ENCODE measurements at regions of chr4 and their contacts with region 1.

Region 1: DNA sequence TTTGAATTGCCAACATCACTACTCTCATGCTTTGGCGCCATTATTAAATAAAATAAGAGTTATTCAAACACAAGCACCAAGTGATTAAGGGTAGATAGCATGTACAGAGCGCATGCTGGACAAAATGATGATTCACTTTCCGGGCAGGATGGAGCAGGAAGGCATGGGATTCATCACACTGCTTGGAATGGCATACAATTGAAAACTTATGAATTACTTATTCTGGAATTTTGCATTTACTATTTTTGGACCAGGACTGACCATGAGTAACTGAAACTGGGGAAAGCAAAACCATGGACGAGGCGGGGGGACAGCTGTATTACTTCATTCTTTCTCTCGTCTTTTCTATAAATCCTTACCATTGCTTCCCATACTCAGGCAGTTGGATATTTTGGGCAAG is 28.5 kb upstream of the FGF5 start:
- DNase-seq: peak; percentile 77
- H3K4me3 ChIP-seq: no peak overlapping the region
- H3K27ac ChIP-seq: peak overlapping the region; percentile 88
- H3K4me1 ChIP-seq: peaks cover 43% of the 10 kb centered on the region
- H3K27me3 ChIP-seq: no peaks in the 10 kb centered on the region
- CTCF ChIP-seq: no peak
- POLR2A ChIP-seq: no peak

Region 2: GRCh38 chr4:79650794-79651431 is 587.1 kb before region 1 on chr4:
- CTCF ChIA-PET with region 1: no interaction called
- POLR2A ChIA-PET with region 1: no interaction called
- dilution Hi-C with region 1: no loop called
- intact Hi-C with region 1: loop called (anchors 1 kb)
- DNase-seq: peak; percentile 96
- H3K4me3 ChIP-seq: peak overlapping the region in 1 of 3 experiments; percentile 3
- H3K27ac ChIP-seq: peak overlapping the region; percentile 87
- H3K4me1 ChIP-seq: peaks cover 29% of the 10 kb centered on the region
- H3K27me3 ChIP-seq: no peaks in the 10 kb centered on the region
- CTCF ChIP-seq: no peak
- POLR2A ChIP-seq: no peak

Measured in endothelial cell of umbilical vein (primary cell).